ENCODE measurements at regions of chr1 and their contacts with region 1.

Region 1: GRCh38 chr1:89201106-89201794 is 2.5 kb upstream of the GBP4 start:
- DNase-seq: no peak
- H3K4me3 ChIP-seq: no peak overlapping the region
- H3K27ac ChIP-seq: no peak overlapping the region
- H3K4me1 ChIP-seq: peaks cover 36% of the 10 kb centered on the region
- H3K27me3 ChIP-seq: no peaks in the 10 kb centered on the region
- CTCF ChIP-seq: no peak

Region 2: DNA sequence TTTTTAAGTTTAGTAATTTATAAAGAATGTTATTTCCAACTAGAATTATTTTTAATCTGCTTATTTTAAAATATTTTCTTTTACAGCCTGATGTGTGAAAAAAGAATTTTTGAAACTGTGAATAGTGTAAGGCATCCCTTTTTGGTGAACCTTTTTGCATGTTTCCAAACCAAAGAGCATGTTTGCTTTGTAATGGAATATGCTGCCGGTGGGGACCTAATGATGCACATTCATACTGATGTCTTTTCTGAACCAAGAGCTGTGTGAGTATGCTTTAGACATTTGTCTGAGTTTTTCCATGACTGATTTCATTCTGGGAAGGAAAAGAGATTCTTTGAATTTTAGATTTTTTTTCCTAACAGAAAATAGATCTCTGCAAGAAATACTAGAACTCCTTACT is 387.8 kb before region 1 on chr1:
- intact Hi-C with region 1: no loop called
- DNase-seq: no peak
- H3K4me3 ChIP-seq: no peak overlapping the region
- H3K27ac ChIP-seq: no peak overlapping the region
- H3K4me1 ChIP-seq: no peaks in the 10 kb centered on the region
- H3K27me3 ChIP-seq: no peaks in the 10 kb centered on the region
- CTCF ChIP-seq: no peak

Region 3: DNA sequence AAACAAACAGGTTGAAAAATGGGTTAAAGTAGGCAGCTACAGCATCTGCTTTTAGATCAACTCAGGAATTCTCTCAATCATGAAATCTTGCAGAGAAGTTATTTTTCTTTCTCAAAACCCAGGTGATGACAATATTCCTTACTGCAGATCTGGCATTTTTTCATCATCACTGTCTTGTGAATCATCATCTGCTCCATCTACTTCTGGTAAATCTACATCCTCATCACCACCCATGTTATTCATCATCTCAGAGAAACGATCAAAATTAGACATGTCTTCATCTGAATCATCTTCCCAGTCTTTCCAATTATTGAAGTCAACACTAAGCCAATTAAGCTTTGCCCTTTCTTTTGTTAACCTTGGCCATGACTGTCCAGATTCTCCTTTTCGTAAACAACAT is 97.1 kb before region 1 on chr1:
- intact Hi-C with region 1: no loop called
- DNase-seq: no peak
- H3K4me3 ChIP-seq: no peak overlapping the region
- H3K27ac ChIP-seq: no peak overlapping the region
- H3K4me1 ChIP-seq: no peaks in the 10 kb centered on the region
- H3K27me3 ChIP-seq: no peaks in the 10 kb centered on the region
- CTCF ChIP-seq: no peak

Region 4: DNA sequence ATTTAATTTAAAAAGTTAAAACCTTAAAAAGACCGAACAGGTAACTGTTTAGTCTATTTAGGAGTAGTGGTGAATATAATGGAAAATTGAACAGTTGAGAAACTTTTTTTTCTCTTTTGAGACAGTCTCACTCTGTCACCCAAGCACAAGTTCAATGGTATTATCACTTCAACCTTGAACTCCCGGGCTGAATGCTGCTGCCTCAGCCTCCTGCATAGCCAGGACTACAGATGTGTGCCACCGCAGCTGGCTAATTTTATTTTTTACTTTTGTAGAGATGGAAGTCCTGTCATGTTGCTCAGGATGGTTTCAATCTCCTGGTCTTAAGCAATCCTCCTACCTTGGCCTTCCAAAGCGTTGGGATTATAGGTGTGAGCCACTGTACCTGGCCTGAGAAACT is 59.1 kb before region 1 on chr1:
- intact Hi-C with region 1: no loop called
- DNase-seq: no peak
- H3K4me3 ChIP-seq: no peak overlapping the region
- H3K27ac ChIP-seq: no peak overlapping the region
- H3K4me1 ChIP-seq: no peaks in the 10 kb centered on the region
- H3K27me3 ChIP-seq: no peaks in the 10 kb centered on the region
- CTCF ChIP-seq: no peak

Region 5: DNA sequence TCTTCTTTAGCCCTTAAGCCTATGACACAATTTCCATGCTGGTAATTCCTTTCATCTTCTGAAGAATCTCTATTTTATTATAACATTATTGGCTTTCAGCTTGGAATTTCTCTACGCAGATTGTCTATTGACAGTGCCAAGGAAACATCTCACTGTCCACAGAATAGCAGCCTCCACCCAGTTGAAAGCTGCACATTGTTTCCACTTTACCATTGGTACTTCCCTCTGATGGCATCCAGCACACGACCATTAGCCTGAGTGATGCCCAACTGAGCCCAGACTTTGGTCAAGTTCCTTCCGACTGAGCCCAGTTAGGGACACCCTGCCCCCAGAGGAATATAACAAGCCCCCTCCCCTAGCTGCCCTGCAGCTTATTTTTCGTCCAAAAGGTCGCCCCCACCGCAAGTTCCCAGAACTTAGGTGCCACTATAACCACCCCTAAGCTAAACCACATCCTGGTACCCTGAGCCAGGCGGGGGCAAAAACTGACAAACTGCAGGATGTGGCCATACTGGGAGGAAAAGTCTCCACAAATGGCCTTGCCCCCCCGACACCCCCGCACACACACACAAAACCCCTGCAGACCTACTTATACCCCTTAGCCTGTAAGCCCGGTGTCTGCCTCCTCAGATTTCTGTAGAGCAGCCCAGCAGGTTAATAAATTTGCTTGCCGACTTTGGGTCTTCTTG is 58.2 kb after region 1 on chr1:
- intact Hi-C with region 1: loop called (anchors 10 kb)
- DNase-seq: no peak
- H3K4me3 ChIP-seq: no peak overlapping the region
- H3K27ac ChIP-seq: no peak overlapping the region
- H3K4me1 ChIP-seq: peaks cover 39% of the 10 kb centered on the region
- H3K27me3 ChIP-seq: no peaks in the 10 kb centered on the region
- CTCF ChIP-seq: no peak

Measured in left ventricle myocardium inferior (tissue), 1 donor.